ENCODE measurements at regions of chr6 and their contacts with region 1.

Region 1: GRCh38 chr6:158143700-158144099 is 24.4 kb downstream of the SERAC1 start:
- DNase-seq: no peak
- H3K4me3 ChIP-seq: no peak overlapping the region
- H3K27me3 ChIP-seq: no peaks in the 10 kb centered on the region
- CTCF ChIP-seq: 0 out of 2 replicates have a peak, but pooled peaks have one; percentile 19

Region 2: DNA sequence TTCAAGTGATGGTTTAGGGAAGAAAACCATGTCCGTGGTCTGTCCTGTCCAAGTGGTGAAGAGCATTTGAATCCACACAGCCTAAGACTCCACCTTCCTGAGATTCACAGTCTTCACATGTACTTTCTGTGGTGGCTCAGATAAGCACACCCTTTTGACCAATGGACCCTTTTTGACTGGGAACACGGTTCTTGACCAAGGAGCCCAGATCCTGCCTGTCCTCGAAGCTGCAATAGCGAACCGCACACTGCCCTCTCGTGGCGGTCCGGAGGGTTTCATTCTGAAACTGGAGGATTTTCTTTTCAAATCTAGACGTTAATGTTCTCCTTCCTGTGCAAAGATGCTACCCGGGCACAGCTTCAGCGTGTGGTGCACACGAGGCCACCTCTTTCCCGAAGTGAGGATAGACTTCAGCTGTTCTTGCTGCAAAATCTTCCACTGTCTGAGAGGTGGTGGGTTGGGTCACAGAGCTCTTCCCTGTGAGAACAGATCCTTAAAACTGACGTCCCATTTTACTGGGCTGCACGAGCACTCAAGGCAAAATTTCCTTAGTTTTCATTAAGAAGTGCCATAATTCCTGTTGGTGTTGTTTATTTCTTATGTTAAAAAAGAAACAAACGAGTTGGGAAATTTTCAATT is 71.5 kb before region 1 on chr6:
- CTCF ChIA-PET with region 1: no interaction called
- POLR2A ChIA-PET with region 1: no interaction called
- DNase-seq: no peak
- H3K4me3 ChIP-seq: no peak overlapping the region
- H3K27me3 ChIP-seq: no peaks in the 10 kb centered on the region
- CTCF ChIP-seq: peak; percentile 81

Region 3: DNA sequence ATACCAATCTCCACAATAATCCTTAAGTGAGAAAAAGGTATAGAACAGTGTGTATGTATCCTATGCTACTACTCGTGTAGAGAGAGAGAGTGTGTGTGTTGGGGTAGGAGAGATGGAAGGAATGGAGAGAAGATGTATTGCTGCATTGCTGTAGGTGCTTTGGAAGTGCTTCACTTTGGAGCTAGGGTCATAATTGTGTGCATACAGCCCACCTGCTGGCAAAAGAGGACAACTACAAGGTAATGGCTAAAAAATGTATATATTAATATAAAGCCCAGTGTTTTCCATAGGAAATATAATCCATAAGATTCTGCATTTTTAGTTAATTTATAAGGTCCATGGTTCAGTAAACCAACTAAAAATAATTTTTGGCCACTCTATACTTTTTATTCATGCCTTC is 11.8 kb before region 1 on chr6:
- CTCF ChIA-PET with region 1: interaction called, 14 read pairs
- POLR2A ChIA-PET with region 1: no interaction called
- DNase-seq: no peak
- H3K4me3 ChIP-seq: no peak overlapping the region
- H3K27me3 ChIP-seq: no peaks in the 10 kb centered on the region
- CTCF ChIP-seq: peak; percentile 33

Region 4: GRCh38 chr6:158253248-158253647 is 109.5 kb after region 1 on chr6:
- CTCF ChIA-PET with region 1: no interaction called
- POLR2A ChIA-PET with region 1: no interaction called
- DNase-seq: no peak
- H3K4me3 ChIP-seq: no peak overlapping the region
- H3K27me3 ChIP-seq: no peaks in the 10 kb centered on the region
- CTCF ChIP-seq: no peak

Region 5: DNA sequence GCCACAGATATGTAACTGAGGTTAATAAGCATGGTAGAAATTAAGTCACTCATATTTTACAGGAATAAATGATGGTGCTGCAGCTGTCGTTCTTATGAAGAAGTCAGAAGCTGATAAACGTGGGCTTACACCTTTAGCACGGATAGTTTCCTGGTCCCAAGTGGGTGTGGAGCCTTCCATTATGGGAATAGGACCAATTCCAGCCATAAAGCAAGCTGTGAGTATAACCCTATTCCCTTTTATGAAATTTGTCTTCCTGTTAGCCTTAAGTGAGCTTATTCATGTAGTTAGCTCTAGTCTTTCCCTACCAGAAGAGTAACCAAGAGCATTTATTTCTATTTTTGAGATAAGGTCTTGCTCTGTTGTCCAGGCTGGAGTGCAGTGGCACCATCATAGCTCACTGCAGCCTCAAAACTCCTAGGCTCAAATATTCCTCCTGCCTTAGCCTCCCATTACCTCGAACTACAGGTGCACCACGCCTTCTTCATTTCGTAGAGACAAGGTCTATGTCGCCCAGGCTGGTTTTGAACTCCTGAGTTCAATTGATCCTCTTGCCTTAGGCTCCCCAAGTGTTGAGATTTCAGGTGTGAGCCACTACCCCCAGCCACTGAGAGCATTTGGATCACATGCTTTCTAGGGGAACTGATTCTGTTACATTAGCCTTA is 1633.7 kb after region 1 on chr6:
- CTCF ChIA-PET with region 1: no interaction called
- POLR2A ChIA-PET with region 1: interaction called, 13 read pairs
- DNase-seq: no peak
- H3K4me3 ChIP-seq: no peak overlapping the region
- H3K27me3 ChIP-seq: no peaks in the 10 kb centered on the region
- CTCF ChIP-seq: no peak